Breast epithelium (tissue), 4 donors: ENCODE measurements at regions of chr16 and their contacts with region 1.

Region 1: DNA sequence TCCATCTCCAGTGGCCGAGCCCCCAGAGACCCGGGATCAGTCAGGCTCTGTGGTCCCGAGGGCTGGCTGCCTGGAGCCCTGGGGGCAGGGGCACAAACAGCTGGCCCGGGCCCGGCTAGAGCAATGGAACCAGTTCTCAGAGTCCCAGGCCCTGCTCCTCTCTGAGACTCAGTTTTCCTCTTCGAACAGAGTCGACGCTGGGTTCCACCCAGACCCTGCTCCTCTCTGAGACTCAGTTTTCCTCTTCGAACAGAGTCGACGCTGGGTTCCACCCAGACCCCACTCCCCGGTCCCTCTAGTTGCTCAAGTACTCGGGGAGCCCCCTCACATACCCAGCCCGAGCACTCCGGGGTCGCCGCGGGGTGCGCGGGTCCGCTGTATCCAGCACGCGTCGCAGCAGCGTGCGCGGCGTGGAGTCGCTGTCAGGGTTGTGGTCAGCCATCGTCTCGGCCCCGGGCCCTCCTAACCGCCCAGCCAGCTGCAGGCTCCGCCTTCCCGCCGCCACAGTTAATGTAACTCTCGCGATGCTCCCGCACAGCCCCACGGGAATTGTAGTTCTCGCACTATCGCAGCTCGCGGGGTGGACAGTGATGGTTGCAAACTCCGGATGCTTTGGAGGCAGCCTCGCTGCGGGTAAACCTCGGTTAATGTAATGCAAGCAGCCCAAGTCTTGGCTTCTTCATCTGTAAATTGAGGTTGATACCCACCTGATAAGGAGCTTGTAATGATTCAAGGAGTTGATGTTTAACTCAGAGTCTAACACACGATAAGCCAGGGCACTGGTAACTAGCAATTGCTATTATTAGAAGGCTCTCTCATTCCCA is 8.5 kb upstream of the THAP11 start:
- DNase-seq: peak; percentile 83 to 91
- H3K4me3 ChIP-seq: peak overlapping the region; percentile 83 to 92 (median 90)
- H3K27ac ChIP-seq: peak overlapping the region; percentile 72
- H3K4me1 ChIP-seq: peaks cover 0 to 5% of the 10 kb centered on the region in 2 donors
- H3K27me3 ChIP-seq: no peaks in the 10 kb centered on the region
- CTCF ChIP-seq: no peak
- POLR2A ChIP-seq: no peak

Region 2: GRCh38 chr16:66881014-66881417 is 952.6 kb before region 1 on chr16:
- intact Hi-C with region 1: no loop called
- DNase-seq: peak in 1 of 2 donors; percentile 26
- H3K4me3 ChIP-seq: peak overlapping the region; percentile 84 to 89 (median 88)
- H3K27ac ChIP-seq: peak overlapping the region; percentile 80 to 83
- H3K4me1 ChIP-seq: no peaks in the 10 kb centered on the region
- H3K27me3 ChIP-seq: no peaks in the 10 kb centered on the region
- CTCF ChIP-seq: no peak
- POLR2A ChIP-seq: no peak

Region 3: DNA sequence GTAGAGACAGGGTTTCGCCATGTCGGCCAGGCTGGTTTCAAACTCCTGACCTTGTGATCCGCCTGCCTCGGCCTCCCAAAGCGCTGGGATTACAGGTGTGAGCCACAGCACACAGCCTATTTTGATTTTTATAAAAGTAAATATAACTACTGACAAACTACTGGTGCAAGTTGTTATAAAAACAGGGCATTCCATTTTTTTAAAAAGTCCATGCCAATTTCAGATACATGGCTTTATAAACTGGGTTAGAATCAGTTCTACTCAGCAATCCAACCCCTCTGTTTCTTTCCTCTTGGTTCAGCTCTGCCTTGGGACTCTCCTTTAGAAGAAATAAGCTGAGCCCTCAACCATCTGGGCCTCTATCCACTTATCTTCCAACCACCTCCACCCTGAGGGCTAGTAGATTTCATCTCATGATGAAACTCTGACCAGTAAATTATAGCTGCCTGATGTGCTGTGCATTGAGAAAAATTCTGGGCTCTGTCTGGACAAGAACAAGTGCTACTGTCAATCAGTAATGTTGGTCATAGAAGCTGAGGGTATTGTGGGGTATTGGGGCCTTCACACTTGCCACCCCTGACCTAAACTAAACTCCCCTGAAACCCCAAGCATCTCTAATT is 37.4 kb before region 1 on chr16:
- intact Hi-C with region 1: no loop called
- DNase-seq: no peak
- H3K4me3 ChIP-seq: no peak overlapping the region
- H3K27ac ChIP-seq: no peak overlapping the region
- H3K4me1 ChIP-seq: no peaks in the 10 kb centered on the region
- H3K27me3 ChIP-seq: no peaks in the 10 kb centered on the region
- CTCF ChIP-seq: no peak
- POLR2A ChIP-seq: no peak

Region 4: DNA sequence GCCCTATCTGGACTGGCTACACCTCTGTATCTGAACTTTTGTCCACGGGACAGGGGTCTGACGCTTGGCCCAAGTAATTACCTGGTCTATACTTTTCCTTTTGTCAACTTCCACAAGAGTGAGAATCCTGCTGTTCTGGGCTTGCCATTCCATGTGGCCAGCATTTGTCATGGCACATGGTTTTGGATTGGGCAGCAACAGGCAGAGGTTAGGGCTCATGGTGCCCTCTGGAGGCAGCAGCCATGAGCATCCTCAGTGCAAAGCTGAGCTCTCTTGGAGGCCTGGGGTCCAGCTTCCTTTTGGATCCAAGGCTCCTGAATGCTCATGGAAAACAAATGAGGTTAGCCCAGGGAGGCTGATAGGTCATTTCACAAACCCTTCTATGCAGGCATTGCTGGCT is 31.7 kb after region 1 on chr16:
- intact Hi-C with region 1: loop called (anchors 2 kb)
- DNase-seq: no peak
- H3K4me3 ChIP-seq: no peak overlapping the region
- H3K27ac ChIP-seq: no peak overlapping the region
- H3K4me1 ChIP-seq: peaks cover 0 to 4% of the 10 kb centered on the region in 2 donors
- H3K27me3 ChIP-seq: no peaks in the 10 kb centered on the region
- CTCF ChIP-seq: no peak
- POLR2A ChIP-seq: no peak

Region 5: GRCh38 chr16:67935402-67936123 is 101.9 kb after region 1 on chr16:
- intact Hi-C with region 1: no loop called
- DNase-seq: peak; percentile 95 to 97
- H3K4me3 ChIP-seq: peak overlapping the region; percentile 84 to 89 (median 86)
- H3K27ac ChIP-seq: peak overlapping the region; percentile 89 to 98
- H3K4me1 ChIP-seq: peaks cover 9 to 12% of the 10 kb centered on the region in 2 donors
- H3K27me3 ChIP-seq: no peaks in the 10 kb centered on the region
- CTCF ChIP-seq: peak in 1 of 3 donors; percentile 8
- POLR2A ChIP-seq: peak; percentile 77